ENCODE measurements at regions of chr12 and their contacts with region 1.

Region 1: DNA sequence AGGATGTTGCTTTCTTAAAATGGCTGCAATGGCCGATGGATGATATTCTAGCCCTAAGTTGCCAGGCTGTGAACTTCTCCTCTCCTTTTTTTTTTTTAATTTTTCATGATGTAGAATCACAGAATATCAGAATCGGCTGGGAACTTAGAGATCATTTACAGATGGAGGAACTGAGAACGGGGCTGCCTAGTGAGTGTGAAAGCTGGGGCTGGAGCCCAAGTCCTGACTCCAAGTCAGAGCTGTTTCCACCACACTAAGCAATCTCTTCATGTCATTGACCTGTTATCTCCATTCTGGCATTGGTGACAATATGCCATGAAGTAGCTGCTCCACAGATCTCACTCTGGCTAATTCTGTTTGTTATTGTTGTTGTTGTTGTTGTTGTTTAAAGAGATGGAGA is 121.7 kb downstream of the SLC38A1 start:
- DNase-seq: no peak
- ATAC-seq: no peak
- H3K4me3 ChIP-seq: no peak overlapping the region
- H3K27ac ChIP-seq: no peak overlapping the region
- H3K4me1 ChIP-seq: peaks cover 0 to 4% (median 0%) of the 10 kb centered on the region in 3 donors
- H3K27me3 ChIP-seq: no peaks in the 10 kb centered on the region
- CTCF ChIP-seq: no peak

Region 2: GRCh38 chr12:45893240-45893639 is 253.9 kb before region 1 on chr12:
- intact Hi-C with region 1: no loop called
- DNase-seq: no peak
- ATAC-seq: no peak
- H3K4me3 ChIP-seq: no peak overlapping the region
- H3K27ac ChIP-seq: no peak overlapping the region
- H3K4me1 ChIP-seq: no peaks in the 10 kb centered on the region
- H3K27me3 ChIP-seq: no peaks in the 10 kb centered on the region
- CTCF ChIP-seq: no peak

Region 3: GRCh38 chr12:46209170-46209569 is 62.0 kb after region 1 on chr12:
- intact Hi-C with region 1: no loop called
- DNase-seq: no peak
- ATAC-seq: peak in 2 of 4 donors; percentile 5 to 15
- H3K4me3 ChIP-seq: no peak overlapping the region
- H3K27ac ChIP-seq: peak overlapping the region; percentile 39 to 74 (median 62)
- H3K4me1 ChIP-seq: peaks cover 21 to 34% (median 21%) of the 10 kb centered on the region in 3 donors
- H3K27me3 ChIP-seq: no peaks in the 10 kb centered on the region
- CTCF ChIP-seq: no peak

Region 4: GRCh38 chr12:46292755-46293402 is 145.7 kb after region 1 on chr12:
- intact Hi-C with region 1: loop called in 1 of 3 experiments (anchors 10 kb)
- DNase-seq: no peak
- ATAC-seq: no peak
- H3K4me3 ChIP-seq: no peak overlapping the region
- H3K27ac ChIP-seq: no peak overlapping the region
- H3K4me1 ChIP-seq: no peaks in the 10 kb centered on the region
- H3K27me3 ChIP-seq: no peaks in the 10 kb centered on the region
- CTCF ChIP-seq: no peak

Measured in pancreas (tissue), 10 donors.